GM10248 (cell line): ENCODE measurements at regions of chr6 and their contacts with region 1.

Region 1: DNA sequence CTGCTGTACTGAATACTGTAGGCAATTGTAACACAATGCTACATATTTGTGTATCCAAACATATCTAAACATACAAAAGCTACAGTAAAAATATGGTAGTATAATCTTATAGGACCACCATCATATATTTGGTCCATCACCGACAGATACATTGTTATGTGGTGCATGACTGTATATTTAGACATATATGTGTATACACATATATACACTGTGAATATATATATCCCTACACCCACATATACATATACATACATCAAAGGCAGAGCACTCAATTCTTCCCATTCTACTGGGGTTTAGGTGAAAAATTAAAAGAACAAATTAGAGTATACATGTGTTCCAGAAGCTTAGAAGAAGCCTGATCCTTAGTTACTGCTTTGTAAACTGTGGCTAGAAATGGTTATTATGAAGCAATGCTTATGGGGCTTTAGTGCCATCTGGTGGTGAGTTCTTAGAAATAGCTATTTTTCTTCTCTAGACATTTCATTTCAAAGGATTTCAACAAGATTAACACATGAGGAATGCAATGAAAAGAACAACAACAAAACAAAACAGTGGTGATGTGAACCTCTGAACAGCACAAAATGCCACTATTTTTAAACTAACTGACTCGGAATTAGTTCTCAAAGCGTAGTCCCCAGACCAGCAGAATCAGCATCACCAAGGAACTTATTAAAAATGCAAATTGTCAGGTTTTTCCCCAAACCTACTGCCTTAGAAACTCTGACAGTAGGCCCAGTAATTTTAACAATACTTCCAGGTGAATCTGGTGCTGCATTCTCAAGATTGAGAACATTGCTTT is 38.0 kb downstream of the PKHD1 start:
- DNase-seq: peak; percentile 40
- CTCF ChIP-seq: peak; percentile 62

Region 2: DNA sequence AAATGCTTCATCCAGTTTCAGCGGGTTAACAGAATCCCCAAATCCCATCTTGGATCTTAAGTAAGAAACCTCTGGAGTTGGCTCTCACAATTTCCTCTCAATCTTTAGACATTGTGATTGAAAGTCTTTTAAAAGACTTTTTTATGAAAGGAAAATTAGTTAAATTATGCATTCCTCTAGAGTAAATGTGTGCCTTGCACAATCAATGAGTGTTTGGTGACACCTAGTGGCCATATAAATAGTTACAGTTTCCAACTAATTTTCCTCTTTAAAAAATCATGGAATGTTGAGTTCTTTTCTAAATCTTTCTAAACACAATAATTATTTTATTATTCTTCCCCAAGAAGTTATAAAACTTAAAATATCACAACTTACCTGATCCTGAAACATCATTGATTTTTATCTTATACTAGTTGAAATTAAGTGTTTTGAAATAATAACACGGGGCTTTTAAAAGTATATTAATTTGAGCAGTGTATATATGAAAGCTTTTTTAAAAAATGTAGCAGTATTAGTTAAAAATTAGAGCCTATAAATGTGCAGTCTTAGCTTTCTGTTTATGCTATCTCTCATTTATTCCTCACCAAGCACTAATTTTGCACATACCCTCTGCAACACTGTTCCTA is 28.4 kb before region 1 on chr6:
- CTCF ChIA-PET with region 1: interaction called, 33 read pairs
- POLR2A ChIA-PET with region 1: no interaction called
- DNase-seq: no peak
- CTCF ChIP-seq: peak; percentile 59

Region 3: DNA sequence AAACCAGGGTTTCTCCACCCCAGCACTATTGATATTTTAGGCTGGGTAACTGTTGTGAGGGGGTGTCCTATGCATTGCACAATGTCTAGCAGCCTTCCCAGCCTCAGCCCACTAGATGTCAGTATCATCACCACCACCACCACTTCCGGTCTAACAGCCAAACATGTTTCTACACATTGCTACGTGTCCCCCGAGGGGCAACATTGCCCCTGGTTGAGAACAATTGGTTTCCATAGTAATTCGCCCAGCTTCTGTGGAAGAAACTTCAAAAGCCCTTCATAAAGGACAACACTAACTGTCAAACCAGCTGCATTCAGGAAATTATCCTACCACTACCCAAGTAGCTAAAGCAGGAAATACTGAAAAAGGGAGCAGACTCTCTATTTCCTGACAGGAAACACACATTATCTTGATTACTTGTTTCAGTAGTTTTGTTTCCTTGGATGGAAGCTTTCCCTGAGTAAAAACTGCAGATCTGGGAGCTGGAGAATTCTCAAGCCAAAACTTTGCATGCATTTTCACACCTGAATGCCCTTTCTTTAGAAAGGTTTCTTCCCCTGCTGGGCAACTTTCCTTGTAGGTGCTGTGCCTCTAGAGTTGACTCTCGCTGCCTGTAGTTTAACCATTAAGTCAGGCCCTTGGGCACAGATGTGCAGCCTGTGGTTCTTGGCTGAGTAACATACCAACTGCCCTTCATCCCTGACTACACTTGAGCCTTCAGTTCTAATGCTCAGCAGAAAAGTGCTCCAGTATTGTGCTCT is 14.3 kb after region 1 on chr6:
- CTCF ChIA-PET with region 1: interaction called, 58 read pairs
- POLR2A ChIA-PET with region 1: no interaction called
- DNase-seq: peak; percentile 29
- CTCF ChIP-seq: peak; percentile 50